Dorsolateral prefrontal cortex (tissue), 120 donors: ENCODE measurements at regions of chr3 and their contacts with region 1.

Region 1: GRCh38 chr3:185498503-185499396 is at the start of gene TMEM41A:
- DNase-seq: peak; percentile 84 to 95 (median 92)
- H3K4me3 ChIP-seq: peak within 1 kb of the TSS; percentile 72 to 99 (median 94)
- H3K27ac ChIP-seq: peak within 1 kb of the TSS in 54 of 59 donors; percentile 16 to 91 (median 72)
- H3K27me3 ChIP-seq: no peaks in the 10 kb centered on the region
- CTCF ChIP-seq: peak in 30 of 56 donors; percentile 2 to 40 (median 24)
- total RNA-seq, gene TMEM41A: 9.4 to 19.2 (median 13.9) TPM

Region 2: DNA sequence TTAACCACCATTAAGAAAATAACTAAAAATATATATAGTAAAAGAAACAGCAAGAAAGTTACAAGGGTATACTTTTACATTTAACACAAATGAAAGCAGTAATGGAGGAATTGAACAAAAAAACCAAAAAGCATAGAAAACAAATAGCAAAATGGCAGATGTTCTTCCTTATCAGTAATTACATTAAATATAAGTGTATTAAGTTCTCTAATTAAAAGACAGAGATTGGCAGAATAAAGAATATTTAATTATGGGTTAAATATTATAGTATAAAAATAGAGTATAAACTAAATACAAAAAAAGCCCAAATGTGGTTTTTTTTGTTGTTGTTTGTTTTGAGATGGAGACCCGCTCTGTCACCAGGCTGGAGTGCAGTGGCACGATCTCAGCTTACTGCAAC is 265.4 kb before region 1 on chr3:
- intact Hi-C with region 1: no loop called
- DNase-seq: no peak
- H3K4me3 ChIP-seq: no peak overlapping the region
- H3K27ac ChIP-seq: no peak overlapping the region
- H3K27me3 ChIP-seq: no peaks in the 10 kb centered on the region
- CTCF ChIP-seq: no peak

Region 3: GRCh38 chr3:185558395-185558794 is 59.6 kb after region 1 on chr3:
- intact Hi-C with region 1: loop called in 1 of 2 experiments (anchors 5 kb)
- DNase-seq: no peak
- H3K4me3 ChIP-seq: no peak overlapping the region
- H3K27ac ChIP-seq: no peak overlapping the region
- H3K27me3 ChIP-seq: no peaks in the 10 kb centered on the region
- CTCF ChIP-seq: no peak

Region 4: DNA sequence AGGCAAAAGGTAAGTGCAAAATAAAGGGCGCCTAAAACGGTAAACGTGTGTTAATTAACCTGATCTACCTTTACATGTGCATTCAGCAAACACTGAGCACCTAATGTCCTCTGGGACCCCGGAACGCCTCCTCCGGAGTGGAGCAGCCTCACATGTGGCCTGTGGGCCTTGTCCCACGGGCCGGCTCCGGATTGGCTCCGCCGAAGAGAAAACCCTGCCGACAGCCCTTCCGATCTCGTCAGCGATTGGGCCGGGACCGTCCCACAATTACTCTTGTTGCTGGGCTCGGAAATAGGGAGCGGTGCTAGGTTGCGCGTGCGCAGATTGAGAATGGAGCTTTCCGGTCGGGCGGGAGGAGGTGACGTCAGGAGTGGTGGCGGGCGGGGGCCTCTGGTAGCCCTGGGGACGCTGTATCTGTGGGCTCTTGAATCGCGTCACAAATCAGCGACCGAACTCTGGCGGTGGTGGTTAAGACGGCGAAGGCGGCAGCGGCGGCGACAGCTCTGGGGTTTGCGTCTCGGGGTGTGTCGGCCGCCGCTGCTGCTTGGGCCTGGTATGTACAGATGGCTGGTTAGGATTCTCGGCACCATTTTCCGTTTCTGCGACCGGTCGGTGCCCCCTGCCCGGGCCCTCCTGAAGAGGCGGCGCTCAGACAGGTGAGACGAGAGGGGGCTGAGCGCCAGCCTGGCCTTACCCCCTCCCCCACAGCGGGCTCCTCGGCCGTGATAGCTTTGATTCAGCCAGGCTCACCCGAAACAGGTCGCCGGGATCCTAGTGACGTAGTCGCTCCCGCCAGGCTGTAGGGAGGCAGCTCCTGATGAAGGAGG is 87.3 kb after region 1 on chr3 and contains the start of gene SENP2:
- intact Hi-C with region 1: loop called (anchors 1 to 10 kb)
- DNase-seq: peak; percentile 99 to 100 (median 99)
- H3K4me3 ChIP-seq: peak within 1 kb of the TSS; percentile 61 to 100 (median 95)
- H3K27ac ChIP-seq: peak within 1 kb of the TSS; percentile 37 to 98 (median 92)
- H3K27me3 ChIP-seq: no peaks in the 10 kb centered on the region
- CTCF ChIP-seq: peak in 23 of 56 donors; percentile 3 to 56 (median 27)
- total RNA-seq, gene SENP2: 51.6 to 106 (median 75.9) TPM